Esophagus muscularis mucosa (tissue), 4 donors: ENCODE measurements at regions of chr7 and their contacts with region 1.

Region 1: DNA sequence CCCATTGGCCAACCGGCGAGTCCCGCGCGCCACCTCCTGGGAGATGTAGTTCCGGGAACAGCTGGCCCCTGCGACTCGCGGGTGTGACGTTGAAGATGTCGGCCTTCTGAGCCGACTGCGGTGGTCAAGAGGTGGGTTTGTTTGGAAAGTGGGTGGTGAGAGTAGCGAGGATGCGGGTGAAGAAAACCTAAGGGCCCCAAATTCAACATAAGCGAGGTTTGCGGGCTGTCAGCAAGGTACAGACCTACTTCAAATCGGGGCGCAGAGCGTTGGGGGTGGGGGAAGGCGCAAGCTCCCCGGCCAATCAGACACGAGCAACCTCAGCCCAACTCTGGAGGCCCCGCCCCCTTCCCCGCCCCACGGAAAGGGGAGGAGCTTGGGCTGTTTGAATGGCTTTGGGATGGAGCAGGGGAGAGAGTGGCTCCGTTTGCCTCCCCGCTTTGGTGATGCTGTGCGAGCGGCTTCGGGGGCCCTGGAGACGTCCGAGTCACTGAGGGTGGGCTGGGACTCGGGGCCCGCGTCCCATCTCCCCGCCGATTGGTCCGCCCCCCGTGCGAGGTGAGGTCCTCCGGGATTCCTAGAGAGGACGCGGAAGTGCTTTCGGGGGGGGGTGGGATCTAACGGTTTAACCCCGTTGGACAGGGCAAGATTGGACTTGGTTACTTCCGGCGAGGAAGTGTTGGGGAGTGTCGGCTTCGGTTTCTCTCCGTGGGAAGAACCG is at the start of gene ZKSCAN5:
- DNase-seq: peak; percentile 100
- H3K4me3 ChIP-seq: peak within 1 kb of the TSS; percentile 80 to 92 (median 86)
- H3K27ac ChIP-seq: peak within 1 kb of the TSS; percentile 90 to 96 (median 94)
- H3K4me1 ChIP-seq: peaks cover 33 to 55% (median 46%) of the 10 kb centered on the region in 4 donors
- H3K27me3 ChIP-seq: no peaks in the 10 kb centered on the region
- CTCF ChIP-seq: no peak
- EP300 ChIP-seq: no peak
- POLR2A ChIP-seq: peak; percentile 77
- total RNA-seq, gene ZKSCAN5: 9.6 to 11.2 (median 10.5) TPM

Region 2: GRCh38 chr7:99447943-99448342 is 56.8 kb before region 1 on chr7:
- intact Hi-C with region 1: no loop called
- DNase-seq: no peak
- H3K4me3 ChIP-seq: no peak overlapping the region
- H3K27ac ChIP-seq: no peak overlapping the region
- H3K4me1 ChIP-seq: peaks cover 0 to 13% (median 3%) of the 10 kb centered on the region in 4 donors
- H3K27me3 ChIP-seq: no peaks in the 10 kb centered on the region
- CTCF ChIP-seq: no peak
- EP300 ChIP-seq: no peak
- POLR2A ChIP-seq: no peak

Region 3: DNA sequence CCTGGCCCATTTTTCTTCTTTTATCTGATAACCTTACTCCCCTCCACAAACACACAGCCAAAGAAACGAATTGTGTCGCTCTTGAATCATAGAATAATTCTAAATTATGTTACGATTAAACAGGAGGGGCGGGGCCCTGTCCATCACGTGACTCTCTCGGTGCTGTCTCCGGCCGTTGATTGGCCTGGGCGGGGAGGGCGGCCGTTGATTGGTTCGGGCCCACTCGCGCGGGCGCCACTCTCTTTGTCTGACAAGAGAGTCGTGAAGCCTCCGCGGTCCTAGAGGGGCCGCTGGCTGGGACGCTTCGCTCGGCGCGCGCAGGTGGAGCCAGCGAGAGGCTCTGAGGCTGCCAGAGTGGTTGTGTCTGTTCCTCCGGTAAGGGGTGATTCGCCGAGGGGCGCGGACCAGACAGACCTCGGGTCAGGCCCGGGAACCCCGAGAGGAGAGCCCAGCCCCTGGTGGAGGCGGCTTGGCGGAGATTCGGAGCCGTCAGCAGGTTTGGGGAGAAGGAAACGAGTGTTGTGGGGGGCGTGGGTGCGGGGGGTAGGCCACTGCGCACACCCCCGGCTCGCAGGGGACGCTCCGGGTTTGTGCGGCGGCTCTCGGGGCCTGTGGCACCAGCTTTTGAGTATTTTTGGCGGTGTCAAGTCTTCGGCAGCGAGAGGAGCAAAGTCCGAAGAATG is 32.1 kb before region 1 on chr7 and contains the start of gene ZNF789:
- intact Hi-C with region 1: loop called (anchors 2 kb)
- DNase-seq: peak; percentile 99
- H3K4me3 ChIP-seq: peak within 1 kb of the TSS; percentile 64 to 89 (median 82)
- H3K27ac ChIP-seq: peak within 1 kb of the TSS; percentile 90 to 93 (median 91)
- H3K4me1 ChIP-seq: peaks cover 21 to 27% (median 25%) of the 10 kb centered on the region in 4 donors
- H3K27me3 ChIP-seq: no peaks in the 10 kb centered on the region
- CTCF ChIP-seq: no peak
- EP300 ChIP-seq: no peak
- POLR2A ChIP-seq: no peak
- total RNA-seq, gene ZNF789: 2.5 to 6.2 (median 3.0) TPM

Region 4: GRCh38 chr7:99551767-99552463 is 47.2 kb after region 1 on chr7 and contains the start of gene FAM200A:
- intact Hi-C with region 1: loop called (anchors 5 kb)
- DNase-seq: peak; percentile 95
- H3K4me3 ChIP-seq: peak within 1 kb of the TSS; percentile 78 to 97 (median 86)
- H3K27ac ChIP-seq: peak within 1 kb of the TSS; percentile 87 to 89 (median 88)
- H3K4me1 ChIP-seq: peaks cover 16 to 38% (median 26%) of the 10 kb centered on the region in 4 donors
- H3K27me3 ChIP-seq: no peaks in the 10 kb centered on the region
- CTCF ChIP-seq: no peak
- EP300 ChIP-seq: no peak
- POLR2A ChIP-seq: peak; percentile 61
- total RNA-seq, gene FAM200A: 2.1 to 3.8 (median 3.3) TPM